Right lobe of liver (tissue), 6 donors: ENCODE measurements at regions of chr14 and their contacts with region 1.

Region 1: DNA sequence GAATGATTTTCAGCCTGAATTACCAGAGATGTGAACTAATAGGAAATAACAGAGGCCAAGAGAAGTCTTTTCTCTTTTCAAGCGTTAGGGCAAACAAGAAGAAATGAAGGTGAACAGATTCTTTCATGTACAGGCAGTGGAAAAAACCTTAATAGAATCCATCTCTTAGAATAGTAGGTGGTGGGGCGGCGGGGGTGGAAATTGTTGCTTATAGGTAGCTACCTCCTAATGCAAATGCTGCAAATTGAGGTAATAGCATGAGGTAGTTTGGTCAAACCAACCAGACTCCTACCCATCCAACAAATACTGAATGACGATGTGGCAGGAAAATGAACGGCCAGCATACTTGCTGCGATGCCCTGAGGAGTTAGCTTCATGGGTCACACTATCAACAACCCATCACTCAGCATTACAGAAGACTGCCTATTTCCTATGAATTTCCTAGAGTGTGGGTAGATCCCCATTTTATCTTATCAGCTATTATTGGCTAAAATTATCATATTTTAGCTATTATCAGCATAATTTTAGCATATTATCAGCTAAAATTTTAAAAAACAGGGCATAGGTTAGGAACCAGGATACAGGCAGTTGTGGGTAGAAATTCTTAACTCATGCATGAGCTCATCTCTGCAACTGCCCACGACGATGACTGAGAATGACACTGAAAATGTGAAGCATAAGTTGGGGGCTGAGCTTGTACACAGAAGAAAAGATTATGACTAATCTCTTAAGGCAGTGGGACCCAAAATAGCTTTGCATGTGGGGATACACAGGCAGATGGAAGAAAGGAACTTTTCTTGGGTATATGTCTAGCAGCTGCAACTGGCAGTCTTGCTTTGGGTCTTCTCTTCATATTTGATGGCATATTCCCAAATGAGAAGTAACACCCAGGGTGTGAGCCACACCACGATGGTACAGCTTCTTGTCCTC is 68.7 kb downstream of the NIN start:
- DNase-seq: no peak
- ATAC-seq: no peak
- H3K4me3 ChIP-seq: no peak overlapping the region
- H3K27ac ChIP-seq: no peak overlapping the region
- H3K4me1 ChIP-seq: no peaks in the 10 kb centered on the region
- H3K27me3 ChIP-seq: no peaks in the 10 kb centered on the region
- CTCF ChIP-seq: no peak
- POLR2A ChIP-seq: no peak

Region 2: DNA sequence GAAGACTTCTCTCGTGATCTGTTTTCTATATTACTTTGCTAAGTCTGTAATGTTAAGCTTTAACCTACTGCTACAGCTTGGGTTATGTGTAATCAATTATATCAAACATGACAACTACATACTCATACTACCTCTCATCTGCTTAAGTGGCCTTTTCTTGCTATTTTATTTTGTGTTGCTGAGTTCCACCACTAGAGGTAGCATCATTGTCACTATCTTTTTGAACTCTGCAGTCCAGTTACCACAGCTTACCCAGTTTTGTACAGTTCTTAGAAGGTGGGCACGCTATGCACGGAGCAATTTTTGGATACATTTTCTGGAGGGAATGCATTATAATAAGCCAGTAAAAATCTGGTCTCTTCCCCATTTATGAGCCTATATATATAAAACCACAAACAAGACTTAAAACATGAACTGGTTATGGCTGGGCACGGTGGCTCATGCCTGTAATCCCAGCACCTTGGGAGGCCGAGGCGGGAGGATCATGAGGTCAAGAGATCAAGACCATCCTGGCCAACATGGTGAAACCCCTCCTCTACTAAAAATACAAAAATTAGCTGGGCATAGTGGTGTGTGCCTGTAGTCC is 142.6 kb before region 1 on chr14:
- intact Hi-C with region 1: loop called in 1 of 2 experiments (anchors 10 kb)
- DNase-seq: no peak
- ATAC-seq: peak; percentile 74 to 86 (median 76)
- H3K4me3 ChIP-seq: no peak overlapping the region
- H3K27ac ChIP-seq: no peak overlapping the region
- H3K4me1 ChIP-seq: no peaks in the 10 kb centered on the region
- H3K27me3 ChIP-seq: no peaks in the 10 kb centered on the region
- CTCF ChIP-seq: peak; percentile 55 to 74 (median 60)
- POLR2A ChIP-seq: no peak

Region 3: GRCh38 chr14:50714450-50715073 is 47.7 kb before region 1 on chr14:
- intact Hi-C with region 1: no loop called
- DNase-seq: no peak
- ATAC-seq: peak; percentile 65 to 82 (median 72)
- H3K4me3 ChIP-seq: no peak overlapping the region
- H3K27ac ChIP-seq: no peak overlapping the region
- H3K4me1 ChIP-seq: no peaks in the 10 kb centered on the region
- H3K27me3 ChIP-seq: no peaks in the 10 kb centered on the region
- CTCF ChIP-seq: peak; percentile 31 to 62 (median 53)
- POLR2A ChIP-seq: no peak